Activated T-helper 1 cell treated with anti-CD3 and anti-CD28 coated beads, Interleukin-12 subunit alpha, Interleukin-12 subunit beta, Interleukin-2, Interleukin-4 antibody, amounts not matched to agents 30 ng/mL and 10 ng/mL and 1 ng/mL, durations not matched to agents 14 hours and 24 hours and 36 hours (primary cell): ENCODE measurements at regions of chr7 and their contacts with region 1.

Region 1: GRCh38 chr7:95511716-95512260 is 26.0 kb downstream of the ASB4 start:
- DNase-seq: peak; percentile 31
- H3K4me3 Mint-ChIP-seq: no peak overlapping the region
- H3K27ac Mint-ChIP-seq: no peak overlapping the region
- H3K4me1 Mint-ChIP-seq: no peaks in the 10 kb centered on the region
- H3K27me3 Mint-ChIP-seq: peaks cover 8% of the 10 kb centered on the region

Region 2: GRCh38 chr7:95501261-95501832 is 10.4 kb before region 1 on chr7:
- intact Hi-C with region 1: loop called (anchors 1 kb)
- DNase-seq: peak; percentile 22
- H3K4me3 Mint-ChIP-seq: peak overlapping the region; percentile 20
- H3K27ac Mint-ChIP-seq: peak overlapping the region; percentile 79
- H3K4me1 Mint-ChIP-seq: peaks cover 45% of the 10 kb centered on the region
- H3K27me3 Mint-ChIP-seq: peaks cover 4% of the 10 kb centered on the region

Region 3: GRCh38 chr7:95690367-95690947 is 178.7 kb after region 1 on chr7:
- intact Hi-C with region 1: loop called (anchors 1 kb)
- DNase-seq: no peak
- H3K4me3 Mint-ChIP-seq: no peak overlapping the region
- H3K27ac Mint-ChIP-seq: no peak overlapping the region
- H3K4me1 Mint-ChIP-seq: peaks cover 5% of the 10 kb centered on the region
- H3K27me3 Mint-ChIP-seq: peaks cover 2% of the 10 kb centered on the region

Region 4: DNA sequence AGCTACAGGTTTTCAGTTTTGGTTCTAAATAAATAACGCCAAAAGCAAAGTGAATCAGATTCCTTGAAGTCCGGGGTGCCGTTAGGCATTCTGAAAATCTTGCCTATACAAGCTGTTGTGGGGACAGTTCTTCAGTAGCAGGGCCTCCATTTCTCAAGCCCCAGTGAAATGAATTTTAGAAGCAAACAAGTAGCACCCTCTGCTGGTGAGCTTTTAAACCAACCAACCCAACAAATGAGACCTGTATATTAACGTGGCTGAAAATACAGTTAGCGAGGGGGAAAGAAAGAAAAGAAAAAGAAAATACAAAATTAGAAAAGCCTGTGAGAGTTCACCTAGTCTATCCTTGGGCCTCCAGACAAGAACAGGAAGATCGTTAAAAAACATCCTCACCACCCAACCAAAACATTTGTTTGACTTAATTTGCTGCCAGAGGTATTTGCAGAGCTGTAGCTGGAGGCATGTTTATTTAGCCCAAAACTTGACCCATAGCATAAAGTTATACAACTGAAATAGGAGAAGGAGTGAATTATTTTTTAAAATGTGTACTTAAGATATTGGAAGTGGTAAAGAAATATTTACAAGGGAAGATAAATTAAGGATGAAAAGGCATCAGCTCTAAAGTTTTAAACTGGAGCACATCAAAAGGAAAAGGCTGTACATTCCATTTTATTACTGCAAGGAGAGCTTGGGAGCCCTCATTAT is 359.4 kb after region 1 on chr7:
- intact Hi-C with region 1: loop called (anchors 1 kb)
- DNase-seq: no peak
- H3K4me3 Mint-ChIP-seq: no peak overlapping the region
- H3K27ac Mint-ChIP-seq: no peak overlapping the region
- H3K4me1 Mint-ChIP-seq: no peaks in the 10 kb centered on the region
- H3K27me3 Mint-ChIP-seq: no peaks in the 10 kb centered on the region